Naive thymus-derived CD8-positive, alpha-beta T cell (primary cell): ENCODE measurements at regions of chr19 and their contacts with region 1.

Region 1: GRCh38 chr19:48618916-48619691 is at the starts of genes RPL18 and SPHK2:
- DNase-seq: peak; percentile 88 to 97 (median 93)
- ATAC-seq: peak; percentile 77 to 78
- H3K4me3 Mint-ChIP-seq: peak within 1 kb of the TSS; percentile 94 to 99 (median 96)
- H3K27ac Mint-ChIP-seq: peak within 1 kb of the TSS; percentile 94 to 99 (median 98)
- H3K4me1 Mint-ChIP-seq: peaks cover 28 to 66% (median 47%) of the 10 kb centered on the region in 4 donors
- H3K27me3 Mint-ChIP-seq: no peaks in the 10 kb centered on the region
- polyA plus RNA-seq, gene RPL18: 2,610 to 3,008 (median 2,848) TPM
- polyA plus RNA-seq, gene SPHK2: 7.5 to 9.1 (median 8.3) TPM

Region 2: DNA sequence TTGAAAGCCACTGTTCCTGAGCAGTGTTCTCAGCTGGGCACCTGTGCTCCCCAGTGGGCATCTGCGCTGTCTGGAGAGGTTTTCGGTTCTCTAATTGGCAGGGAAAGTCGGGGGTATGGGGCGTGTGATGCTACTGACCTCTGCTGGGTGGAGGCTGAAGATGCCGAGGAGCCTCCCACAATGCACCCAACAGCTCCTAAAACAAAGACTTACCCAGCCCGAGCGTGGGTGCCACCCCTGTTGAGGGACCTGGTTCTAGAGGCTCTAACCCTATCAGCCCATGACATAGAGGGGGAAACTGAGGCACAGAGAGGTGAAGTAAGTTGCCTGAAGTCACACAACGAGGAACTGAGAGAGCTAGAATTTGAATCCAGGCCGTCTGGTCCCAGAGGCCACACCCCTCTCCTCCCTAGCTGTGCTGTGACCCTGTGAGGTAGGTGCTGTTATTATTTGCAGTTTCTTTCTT is 10.3 kb before region 1 on chr19:
- POLR2A ChIA-PET with region 1: interaction called, 25 read pairs
- DNase-seq: peak in 7 of 10 donors; percentile 24 to 60 (median 46)
- ATAC-seq: peak; percentile 89 to 90
- H3K4me3 Mint-ChIP-seq: peak overlapping the region in 8 of 10 donors; percentile 15 to 71 (median 40)
- H3K27ac Mint-ChIP-seq: peak overlapping the region in 7 of 10 donors; percentile 15 to 83 (median 63)
- H3K4me1 Mint-ChIP-seq: peaks cover 5 to 7% (median 6%) of the 10 kb centered on the region in 4 donors
- H3K27me3 Mint-ChIP-seq: no peaks in the 10 kb centered on the region

Region 3: DNA sequence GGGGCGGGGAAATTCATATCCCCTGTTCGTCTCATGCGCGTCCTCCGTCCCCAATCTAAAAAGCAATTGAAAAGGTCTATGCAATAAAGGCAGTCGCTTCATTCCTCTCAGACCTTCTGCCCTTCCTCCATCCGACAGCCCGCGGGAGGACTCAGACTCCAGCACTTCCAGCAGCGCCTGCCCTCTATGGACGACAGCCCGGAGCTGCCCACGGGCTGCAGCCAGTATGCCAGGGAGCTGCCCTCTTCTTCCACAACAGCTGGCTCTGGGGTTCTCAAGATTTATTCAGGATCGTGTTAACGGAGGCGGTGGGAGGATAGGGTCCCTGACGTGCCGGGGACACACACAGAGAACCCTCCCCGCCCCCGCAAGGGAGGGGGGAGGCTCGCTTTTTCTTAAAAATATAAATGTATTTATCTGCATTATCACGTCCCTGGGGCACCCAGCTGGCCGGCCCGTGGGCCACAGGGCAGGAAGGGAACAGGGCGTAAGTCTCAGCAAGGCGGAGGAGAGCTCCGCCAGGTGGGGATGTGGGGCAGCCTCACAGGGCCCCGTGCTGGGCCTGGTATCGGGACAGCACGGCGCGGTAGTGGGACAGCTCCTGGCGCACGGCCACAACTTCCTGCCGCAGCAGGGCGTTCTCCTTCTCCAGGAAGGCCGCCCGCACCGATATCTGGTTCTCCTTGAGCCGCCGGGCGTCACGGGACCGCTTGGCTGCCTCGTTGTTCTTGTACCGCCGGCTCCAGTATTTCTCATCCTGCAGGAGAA is 11.4 kb after region 1 on chr19:
- POLR2A ChIA-PET with region 1: interaction called, 38 read pairs
- DNase-seq: peak in 1 of 10 donors; percentile 57
- ATAC-seq: no peak
- H3K4me3 Mint-ChIP-seq: no peak overlapping the region
- H3K27ac Mint-ChIP-seq: peak overlapping the region in 6 of 10 donors; percentile 14 to 81 (median 72)
- H3K4me1 Mint-ChIP-seq: peaks cover 13 to 47% (median 44%) of the 10 kb centered on the region in 4 donors
- H3K27me3 Mint-ChIP-seq: no peaks in the 10 kb centered on the region

Region 4: GRCh38 chr19:48637170-48637947 is 18.3 kb after region 1 on chr19 and contains the start of gene DBP:
- POLR2A ChIA-PET with region 1: interaction called, 70 read pairs
- DNase-seq: peak; percentile 97 to 100 (median 100)
- ATAC-seq: peak; percentile 80 to 81
- H3K4me3 Mint-ChIP-seq: peak within 1 kb of the TSS; percentile 81 to 100 (median 98)
- H3K27ac Mint-ChIP-seq: peak within 1 kb of the TSS; percentile 97 to 100 (median 99)
- H3K4me1 Mint-ChIP-seq: peaks cover 31 to 59% (median 52%) of the 10 kb centered on the region in 4 donors
- H3K27me3 Mint-ChIP-seq: no peaks in the 10 kb centered on the region
- polyA plus RNA-seq, gene DBP: 37.5 to 97.8 (median 63.1) TPM